ENCODE measurements at regions of chr2 and their contacts with region 1.

Region 1: GRCh38 chr2:203814661-203815540 is 52.7 kb upstream of the CTLA4 start:
- DNase-seq: peak; percentile 65
- ATAC-seq: peak; percentile 76
- H3K4me3 Mint-ChIP-seq: peak overlapping the region; percentile 39
- H3K27ac Mint-ChIP-seq: no peak overlapping the region
- H3K4me1 Mint-ChIP-seq: peaks cover 49% of the 10 kb centered on the region
- H3K27me3 Mint-ChIP-seq: peaks cover 13% of the 10 kb centered on the region

Region 2: DNA sequence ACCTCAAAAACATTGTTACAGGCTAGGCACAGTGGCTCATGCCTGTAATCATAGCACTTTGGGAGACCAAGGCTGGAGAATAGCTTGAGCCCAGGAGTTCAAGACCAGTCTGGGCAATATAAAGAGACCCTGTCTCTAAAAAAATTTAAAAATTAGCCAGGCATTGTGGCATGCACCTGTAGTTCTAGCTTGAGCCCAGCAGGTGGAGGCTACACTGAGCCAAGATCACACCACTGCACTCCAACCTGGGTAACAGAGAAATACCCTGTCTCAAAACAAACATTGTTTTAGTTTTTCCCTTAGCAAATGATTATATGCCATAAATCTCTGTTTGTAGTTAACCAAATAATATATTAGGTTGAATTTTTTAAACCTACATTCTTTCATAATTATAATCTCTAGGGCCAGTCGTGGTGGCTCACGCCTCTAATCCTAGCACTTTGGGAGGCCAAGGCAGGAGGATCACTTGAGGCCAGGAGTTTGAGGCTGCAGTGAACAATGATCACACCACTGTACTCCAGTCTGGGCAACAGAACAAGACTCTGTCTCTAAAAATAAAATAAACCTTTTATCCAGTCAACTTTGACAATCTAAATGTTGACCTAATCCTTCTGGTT is 589.4 kb before region 1 on chr2:
- CTCF ChIA-PET with region 1: interaction called, 11 read pairs
- DNase-seq: no peak
- ATAC-seq: peak; percentile 57
- H3K4me3 Mint-ChIP-seq: no peak overlapping the region
- H3K27ac Mint-ChIP-seq: no peak overlapping the region
- H3K4me1 Mint-ChIP-seq: no peaks in the 10 kb centered on the region
- H3K27me3 Mint-ChIP-seq: no peaks in the 10 kb centered on the region

Region 3: GRCh38 chr2:203623096-203623495 is 191.8 kb before region 1 on chr2:
- CTCF ChIA-PET with region 1: no interaction called
- DNase-seq: no peak
- ATAC-seq: no peak
- H3K4me3 Mint-ChIP-seq: no peak overlapping the region
- H3K27ac Mint-ChIP-seq: no peak overlapping the region
- H3K4me1 Mint-ChIP-seq: peaks cover 3% of the 10 kb centered on the region
- H3K27me3 Mint-ChIP-seq: peaks cover 10% of the 10 kb centered on the region

Region 4: GRCh38 chr2:203650860-203651613 is 163.9 kb before region 1 on chr2:
- CTCF ChIA-PET with region 1: interaction called, 15 read pairs
- DNase-seq: no peak
- ATAC-seq: peak; percentile 72
- H3K4me3 Mint-ChIP-seq: no peak overlapping the region
- H3K27ac Mint-ChIP-seq: no peak overlapping the region
- H3K4me1 Mint-ChIP-seq: peaks cover 4% of the 10 kb centered on the region
- H3K27me3 Mint-ChIP-seq: peaks cover 9% of the 10 kb centered on the region

Region 5: DNA sequence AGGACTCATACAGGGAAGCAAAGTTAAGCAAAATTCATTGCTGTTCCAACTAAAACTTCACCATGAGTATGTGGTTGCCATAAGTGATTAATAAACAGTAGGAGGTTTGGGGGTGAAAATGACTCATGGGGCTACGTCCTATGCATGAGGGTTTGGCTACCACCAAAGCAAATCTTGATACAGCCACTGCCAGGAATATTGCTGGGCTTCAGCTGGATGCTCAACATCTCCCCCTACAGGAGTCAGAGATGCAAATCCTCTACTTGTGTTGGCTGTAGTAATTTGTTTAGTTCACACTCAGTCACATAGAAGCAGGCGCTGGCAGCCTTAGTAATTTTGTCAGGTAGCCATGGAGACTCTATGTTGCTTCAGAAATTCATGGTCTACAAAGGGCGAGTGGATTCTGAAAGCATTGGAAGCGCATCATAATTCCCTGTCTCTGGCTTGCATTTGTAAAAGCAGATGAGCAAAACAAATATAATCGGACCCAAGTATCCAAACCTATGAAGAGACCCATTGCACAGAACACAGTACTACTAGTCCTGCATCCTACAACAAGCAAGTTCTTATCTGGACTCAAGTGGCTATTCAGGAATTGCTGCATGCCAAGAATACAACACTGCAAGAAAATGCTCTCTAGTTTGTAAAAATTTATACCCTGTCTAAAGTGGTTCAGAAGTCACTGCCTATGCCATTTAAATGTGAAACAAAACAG is 32.5 kb before region 1 on chr2:
- CTCF ChIA-PET with region 1: interaction called, 17 read pairs
- DNase-seq: peak; percentile 81
- ATAC-seq: peak; percentile 92
- H3K4me3 Mint-ChIP-seq: no peak overlapping the region
- H3K27ac Mint-ChIP-seq: peak overlapping the region; percentile 35
- H3K4me1 Mint-ChIP-seq: peaks cover 31% of the 10 kb centered on the region
- H3K27me3 Mint-ChIP-seq: no peaks in the 10 kb centered on the region

Region 6: GRCh38 chr2:203830304-203831055 is 15.6 kb after region 1 on chr2:
- CTCF ChIA-PET with region 1: interaction called, 23 read pairs
- DNase-seq: peak; percentile 84
- ATAC-seq: peak; percentile 93
- H3K4me3 Mint-ChIP-seq: peak overlapping the region; percentile 19
- H3K27ac Mint-ChIP-seq: peak overlapping the region; percentile 89
- H3K4me1 Mint-ChIP-seq: peaks cover 20% of the 10 kb centered on the region
- H3K27me3 Mint-ChIP-seq: no peaks in the 10 kb centered on the region

Region 7: DNA sequence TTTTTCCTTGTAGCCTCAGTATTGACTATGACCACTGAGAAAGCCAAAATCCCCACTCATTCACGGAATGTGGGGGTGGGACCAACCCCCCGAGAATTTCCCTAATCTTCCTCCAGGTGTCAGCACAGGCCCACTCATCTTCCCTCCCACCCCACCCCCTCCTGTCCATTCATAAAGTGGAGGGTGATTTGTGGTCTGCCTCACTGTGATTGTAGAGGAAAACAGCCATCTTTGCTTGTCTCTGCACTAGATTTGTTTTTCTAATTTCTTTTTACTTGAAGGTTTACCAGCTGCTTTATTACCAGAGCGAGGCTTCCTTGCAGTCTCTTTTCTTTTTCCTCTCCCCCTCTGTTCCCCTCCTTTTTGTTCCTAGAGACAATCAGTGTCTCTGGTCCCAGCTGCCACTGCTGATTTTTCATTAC is 293.4 kb after region 1 on chr2:
- CTCF ChIA-PET with region 1: no interaction called
- DNase-seq: peak; percentile 77
- ATAC-seq: peak; percentile 63
- H3K4me3 Mint-ChIP-seq: peak overlapping the region; percentile 70
- H3K27ac Mint-ChIP-seq: peak overlapping the region; percentile 90
- H3K4me1 Mint-ChIP-seq: peaks cover 70% of the 10 kb centered on the region
- H3K27me3 Mint-ChIP-seq: peaks cover 16% of the 10 kb centered on the region